Mammary epithelial cell (primary cell): ENCODE measurements at regions of chr9 and their contacts with region 1.

Region 1: DNA sequence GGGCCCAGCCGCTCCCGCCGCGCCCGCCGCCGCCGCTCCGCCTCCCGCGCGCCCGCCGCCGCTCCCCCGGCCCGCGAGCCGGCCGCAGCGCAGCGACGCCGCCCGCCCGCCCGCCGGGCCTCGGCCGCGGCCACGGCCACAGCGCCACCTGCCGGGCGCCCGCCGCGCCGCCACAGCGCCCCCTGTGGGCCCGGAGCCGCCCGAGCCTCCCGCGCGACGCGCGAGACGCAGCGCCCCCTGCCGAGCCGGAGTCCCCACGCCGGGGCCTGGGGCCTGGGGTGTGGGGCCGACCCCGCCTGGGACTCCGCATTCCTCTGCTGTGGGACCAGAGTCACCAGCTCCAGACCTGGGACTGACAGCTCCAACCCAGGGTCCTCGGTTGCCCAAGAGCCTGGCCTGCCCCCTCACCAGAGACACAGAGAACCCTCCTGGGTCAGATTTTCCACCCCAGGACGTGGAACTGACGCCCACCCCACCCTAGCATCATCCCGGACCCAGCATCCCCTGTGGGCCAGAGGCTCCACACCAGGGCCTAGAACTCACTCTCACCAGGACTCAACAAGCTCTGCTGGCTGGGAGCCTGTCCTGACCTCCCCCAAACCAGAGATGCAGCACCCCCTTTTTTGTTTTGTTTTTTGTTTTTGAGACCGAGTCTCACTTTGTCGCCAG is at the start of gene RAPGEF1:
- DNase-seq: no peak
- H3K4me3 ChIP-seq: peak within 1 kb of the TSS; percentile 66 to 83 (median 71)
- H3K27ac ChIP-seq: peak within 1 kb of the TSS; percentile 57
- H3K4me1 ChIP-seq: peaks cover 11% of the 10 kb centered on the region
- H3K27me3 ChIP-seq: no peaks in the 10 kb centered on the region
- CTCF ChIP-seq: peak; percentile 72 to 76
- total RNA-seq, gene RAPGEF1: 41.7 to 51.3 TPM

Region 2: GRCh38 chr9:131178382-131178781 is 561.7 kb before region 1 on chr9:
- CTCF ChIA-PET with region 1: no interaction called
- dilution Hi-C with region 1: no loop called
- in situ Hi-C with region 1: no loop called
- intact Hi-C with region 1: loop called (anchors 10 kb)
- DNase-seq: peak; percentile 36
- H3K4me3 ChIP-seq: no peak overlapping the region
- H3K27ac ChIP-seq: no peak overlapping the region
- H3K4me1 ChIP-seq: no peaks in the 10 kb centered on the region
- H3K27me3 ChIP-seq: no peaks in the 10 kb centered on the region
- CTCF ChIP-seq: peak; percentile 93 to 97

Region 3: GRCh38 chr9:131423171-131423581 is 316.9 kb before region 1 on chr9:
- CTCF ChIA-PET with region 1: no interaction called
- dilution Hi-C with region 1: no loop called
- in situ Hi-C with region 1: loop called in 1 of 2 experiments (anchors 25 kb)
- intact Hi-C with region 1: no loop called
- DNase-seq: peak; percentile 97
- H3K4me3 ChIP-seq: peak overlapping the region in 1 of 3 experiments; percentile 20
- H3K27ac ChIP-seq: no peak overlapping the region
- H3K4me1 ChIP-seq: peaks cover 44% of the 10 kb centered on the region
- H3K27me3 ChIP-seq: no peaks in the 10 kb centered on the region
- CTCF ChIP-seq: no peak

Region 4: GRCh38 chr9:131590908-131591844 is 148.9 kb before region 1 on chr9:
- CTCF ChIA-PET with region 1: no interaction called
- dilution Hi-C with region 1: no loop called
- in situ Hi-C with region 1: loop called in 1 of 2 experiments (anchors 5 kb)
- intact Hi-C with region 1: loop called (anchors 1 kb)
- DNase-seq: peak; percentile 62
- H3K4me3 ChIP-seq: no peak overlapping the region
- H3K27ac ChIP-seq: no peak overlapping the region
- H3K4me1 ChIP-seq: peaks cover 6% of the 10 kb centered on the region
- H3K27me3 ChIP-seq: no peaks in the 10 kb centered on the region
- CTCF ChIP-seq: peak; percentile 81 to 94

Region 5: GRCh38 chr9:131635285-131635684 is 104.8 kb before region 1 on chr9:
- CTCF ChIA-PET with region 1: no interaction called
- dilution Hi-C with region 1: no loop called
- in situ Hi-C with region 1: no loop called
- intact Hi-C with region 1: loop called (anchors 1 kb)
- DNase-seq: peak; percentile 96
- H3K4me3 ChIP-seq: no peak overlapping the region
- H3K27ac ChIP-seq: peak overlapping the region; percentile 82
- H3K4me1 ChIP-seq: peaks cover 43% of the 10 kb centered on the region
- H3K27me3 ChIP-seq: no peaks in the 10 kb centered on the region
- CTCF ChIP-seq: peak in 1 of 2 donors; percentile 21

Region 6: GRCh38 chr9:131707733-131708157 is 32.4 kb before region 1 on chr9:
- CTCF ChIA-PET with region 1: no interaction called
- dilution Hi-C with region 1: no loop called
- in situ Hi-C with region 1: no loop called
- intact Hi-C with region 1: loop called (anchors 1 kb)
- DNase-seq: peak; percentile 79
- H3K4me3 ChIP-seq: peak overlapping the region in 2 of 3 experiments; percentile 8 to 20
- H3K27ac ChIP-seq: peak overlapping the region; percentile 89
- H3K4me1 ChIP-seq: peaks cover 63% of the 10 kb centered on the region
- H3K27me3 ChIP-seq: no peaks in the 10 kb centered on the region
- CTCF ChIP-seq: no peak

Region 7: DNA sequence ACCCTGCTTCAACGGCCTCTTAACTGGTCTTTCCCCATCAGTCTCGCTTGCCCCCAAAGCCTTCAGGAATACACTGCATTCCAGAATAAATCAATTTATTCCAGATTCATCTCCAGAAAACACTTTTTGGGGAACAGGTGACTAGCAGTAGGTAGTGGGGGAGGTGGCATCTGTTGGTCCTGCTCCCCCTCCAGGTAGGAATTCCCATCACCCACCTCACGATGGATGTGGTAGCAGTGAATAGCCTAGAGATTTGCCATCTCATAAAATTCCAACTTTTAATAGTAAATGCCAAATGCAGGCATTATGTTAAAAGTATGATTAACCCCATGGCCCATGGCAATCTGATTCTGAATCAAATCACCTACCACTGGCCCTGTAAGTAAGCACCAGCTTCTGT is 196.8 kb after region 1 on chr9:
- CTCF ChIA-PET with region 1: no interaction called
- dilution Hi-C with region 1: no loop called
- in situ Hi-C with region 1: no loop called
- intact Hi-C with region 1: no loop called
- DNase-seq: no peak
- H3K4me3 ChIP-seq: no peak overlapping the region
- H3K27ac ChIP-seq: no peak overlapping the region
- H3K4me1 ChIP-seq: no peaks in the 10 kb centered on the region
- H3K27me3 ChIP-seq: no peaks in the 10 kb centered on the region
- CTCF ChIP-seq: no peak